ENCODE measurements at regions of chr12 and their contacts with region 1.

Region 1: DNA sequence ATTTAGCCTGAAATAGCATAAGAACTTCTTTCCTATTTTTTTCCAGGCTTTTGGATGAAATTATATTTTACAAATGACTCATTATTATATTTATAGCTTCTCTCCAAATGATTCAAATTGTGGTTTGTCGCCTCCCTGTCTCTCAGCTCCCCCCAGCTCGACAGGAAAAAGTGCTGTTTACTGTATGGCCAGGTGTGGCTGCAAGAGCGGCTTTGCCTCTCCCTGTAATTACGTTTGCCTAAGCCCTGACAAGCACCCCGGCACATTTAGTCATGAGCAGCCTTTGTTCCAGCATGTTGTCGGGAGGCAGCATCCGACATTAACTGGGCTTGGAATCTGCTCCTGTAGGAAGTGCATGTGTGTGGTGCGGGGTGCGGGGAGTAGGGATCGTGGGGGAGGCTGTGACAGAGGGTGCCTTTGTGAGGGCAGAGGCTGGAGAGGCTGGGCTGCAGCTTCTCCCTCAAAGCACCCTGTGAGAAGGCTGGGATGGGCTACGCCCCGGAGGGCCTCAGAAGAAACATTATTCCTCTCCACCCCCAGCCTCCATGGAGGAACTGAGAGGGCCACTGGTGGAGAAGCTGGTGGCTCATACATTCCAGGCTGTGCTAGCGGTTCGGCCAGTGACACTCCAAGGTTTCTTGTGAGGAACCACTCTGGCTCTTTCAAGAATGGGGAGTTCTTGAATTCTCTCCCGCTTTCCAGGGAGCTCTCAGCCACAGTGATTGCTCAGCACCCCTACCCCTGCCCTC is 42.1 kb upstream of the CTDSP2 start:
- DNase-seq: peak; percentile 70 to 86 (median 80)
- ATAC-seq: peak; percentile 82
- H3K4me3 ChIP-seq: no peak overlapping the region
- H3K4me1 ChIP-seq: peaks cover 66% of the 10 kb centered on the region
- CTCF ChIP-seq: no peak

Region 2: DNA sequence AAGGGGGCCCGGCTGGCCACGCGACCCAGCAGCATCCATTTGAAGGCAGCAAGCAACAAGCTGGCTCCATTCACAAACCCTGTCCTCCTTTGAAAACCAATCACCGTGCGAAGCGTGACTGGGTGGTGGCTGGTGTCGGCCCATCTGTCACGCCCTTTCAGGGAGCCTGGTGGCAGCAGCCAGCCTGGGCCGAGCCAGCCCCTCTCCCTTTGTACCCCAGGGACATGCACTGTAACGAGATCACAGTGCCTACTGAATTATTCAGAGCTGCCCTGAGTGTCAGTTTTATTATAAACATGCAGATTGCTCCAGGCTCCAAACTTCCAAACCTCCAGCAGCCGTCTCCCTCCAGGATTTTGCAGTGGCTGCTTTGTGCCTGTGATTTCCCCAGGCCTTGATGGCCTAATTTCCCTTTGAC is 19.7 kb before region 1 on chr12:
- intact Hi-C with region 1: loop called in 1 of 2 experiments (anchors 2 kb)
- DNase-seq: peak in 1 of 3 donors; percentile 54
- ATAC-seq: no peak
- H3K4me3 ChIP-seq: no peak overlapping the region
- H3K4me1 ChIP-seq: peaks cover 3% of the 10 kb centered on the region
- CTCF ChIP-seq: no peak